Ovary (tissue), 10 donors: ENCODE measurements at regions of chr4 and their contacts with region 1.

Region 1: DNA sequence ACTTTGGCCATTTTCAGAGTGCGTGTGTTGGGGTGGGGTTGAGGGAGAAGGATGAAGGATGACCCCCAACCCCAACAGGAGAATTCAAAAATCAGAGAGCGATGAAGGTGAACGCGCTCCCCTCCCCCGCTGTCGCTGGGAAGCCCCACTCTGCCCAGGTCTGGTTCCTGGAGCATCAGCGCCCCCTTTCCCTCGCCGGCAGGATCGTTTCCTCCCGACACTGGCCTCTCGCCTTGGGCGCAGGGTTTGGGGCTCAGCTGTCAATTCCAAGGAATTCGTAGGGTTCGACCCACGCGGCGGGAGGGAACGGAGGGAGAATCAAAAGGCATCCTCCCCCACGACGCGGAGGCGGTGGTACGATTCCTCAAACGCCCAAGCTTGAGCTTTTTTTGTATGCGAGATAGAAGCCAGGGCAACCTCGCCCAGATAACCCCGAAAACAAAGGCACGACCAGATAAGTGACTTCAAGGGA is 1.0 kb upstream of the PDGFRA start:
- DNase-seq: peak; percentile 92 to 95 (median 93)
- H3K4me3 ChIP-seq: peak overlapping the region; percentile 32
- H3K27ac ChIP-seq: peak overlapping the region; percentile 59 to 81
- H3K4me1 ChIP-seq: peaks cover 4% of the 10 kb centered on the region
- H3K27me3 ChIP-seq: no peaks in the 10 kb centered on the region
- CTCF ChIP-seq: peak; percentile 70 to 91 (median 87)
- EP300 ChIP-seq: no peak
- POLR2A ChIP-seq: peak; percentile 28

Region 2: DNA sequence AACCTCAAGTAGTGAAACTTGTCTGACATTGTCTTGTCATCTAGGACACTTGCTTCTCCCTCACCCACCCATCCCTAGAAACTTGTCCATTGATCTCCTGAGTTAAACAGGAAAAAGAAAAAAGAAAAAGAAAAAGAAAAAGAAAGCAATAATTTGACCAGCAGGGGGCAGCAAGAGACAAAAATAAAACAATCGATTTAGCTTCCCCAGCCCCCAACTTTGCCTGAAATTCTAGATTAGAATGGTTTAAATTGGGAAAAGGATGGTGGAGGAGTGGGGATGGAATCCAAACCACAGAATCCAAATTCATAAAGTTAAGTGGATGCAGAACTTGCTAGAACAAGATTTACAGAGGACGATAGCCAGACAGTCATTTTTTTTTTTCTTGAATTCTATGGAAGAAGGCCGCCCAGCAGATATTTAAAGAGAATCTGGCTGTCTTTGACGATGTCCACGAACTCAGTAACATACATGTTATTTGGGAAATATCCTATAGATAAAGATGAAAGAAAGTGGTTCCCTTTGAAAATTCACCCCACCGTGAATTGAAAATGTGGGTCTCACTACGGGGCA is 1851.9 kb before region 1 on chr4:
- intact Hi-C with region 1: loop called in 1 of 4 experiments (anchors 10 kb)
- DNase-seq: peak in 3 of 5 donors; percentile 17 to 43 (median 32)
- H3K4me3 ChIP-seq: no peak overlapping the region
- H3K27ac ChIP-seq: no peak overlapping the region
- H3K4me1 ChIP-seq: no peaks in the 10 kb centered on the region
- H3K27me3 ChIP-seq: no peaks in the 10 kb centered on the region
- CTCF ChIP-seq: peak; percentile 32 to 67 (median 56)
- EP300 ChIP-seq: no peak
- POLR2A ChIP-seq: no peak

Region 3: GRCh38 chr4:53015681-53016080 is 1212.4 kb before region 1 on chr4:
- intact Hi-C with region 1: loop called (anchors 5 to 10 kb)
- DNase-seq: peak; percentile 58 to 76 (median 59)
- H3K4me3 ChIP-seq: no peak overlapping the region
- H3K27ac ChIP-seq: peak overlapping the region in 1 of 2 donors; percentile 38
- H3K4me1 ChIP-seq: peaks cover 25% of the 10 kb centered on the region
- H3K27me3 ChIP-seq: no peaks in the 10 kb centered on the region
- CTCF ChIP-seq: peak; percentile 59 to 79 (median 75)
- EP300 ChIP-seq: no peak
- POLR2A ChIP-seq: no peak

Region 4: GRCh38 chr4:53702334-53703266 is 525.5 kb before region 1 on chr4:
- intact Hi-C with region 1: loop called in 2 of 4 experiments (anchors 2 to 10 kb)
- DNase-seq: peak; percentile 81 to 90 (median 87)
- H3K4me3 ChIP-seq: no peak overlapping the region
- H3K27ac ChIP-seq: peak overlapping the region in 1 of 2 donors; percentile 52
- H3K4me1 ChIP-seq: peaks cover 8% of the 10 kb centered on the region
- H3K27me3 ChIP-seq: no peaks in the 10 kb centered on the region
- CTCF ChIP-seq: no peak
- EP300 ChIP-seq: no peak
- POLR2A ChIP-seq: no peak

Region 5: DNA sequence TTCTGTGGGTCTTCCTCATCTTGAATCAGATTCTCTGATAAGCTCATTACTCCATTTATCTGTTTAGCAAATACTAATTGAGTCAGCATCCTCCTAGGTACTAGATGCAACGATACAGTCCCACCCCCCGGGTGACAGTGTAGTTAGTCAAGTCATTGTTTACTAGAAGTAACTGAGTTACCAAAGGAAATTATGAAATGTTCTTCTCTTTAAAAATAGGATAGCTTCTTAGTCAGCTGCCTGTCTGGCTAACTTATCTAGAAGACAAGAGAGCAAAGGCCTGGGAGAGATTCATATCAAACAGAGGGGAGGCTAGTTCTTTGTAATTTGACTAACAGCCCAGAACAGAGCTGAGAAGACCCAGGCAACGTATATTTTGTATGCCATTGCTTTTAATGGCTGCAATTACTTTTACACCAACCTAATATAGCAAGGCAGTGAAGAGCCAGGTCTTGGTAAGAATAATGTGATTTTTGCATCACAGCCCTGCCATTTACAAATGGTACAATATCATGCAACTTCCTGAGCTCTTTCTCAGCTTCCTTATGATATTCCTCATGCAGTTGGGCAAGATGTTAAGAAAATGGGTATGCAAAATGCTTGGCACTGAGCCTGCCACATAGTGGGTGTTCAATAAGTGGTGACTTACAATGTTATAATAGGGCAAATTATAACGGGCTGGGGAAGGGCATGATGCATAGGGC is 313.6 kb before region 1 on chr4:
- intact Hi-C with region 1: loop called (anchors 5 to 10 kb)
- DNase-seq: no peak
- H3K4me3 ChIP-seq: no peak overlapping the region
- H3K27ac ChIP-seq: no peak overlapping the region
- H3K4me1 ChIP-seq: no peaks in the 10 kb centered on the region
- H3K27me3 ChIP-seq: no peaks in the 10 kb centered on the region
- CTCF ChIP-seq: no peak
- EP300 ChIP-seq: no peak
- POLR2A ChIP-seq: no peak

Region 6: DNA sequence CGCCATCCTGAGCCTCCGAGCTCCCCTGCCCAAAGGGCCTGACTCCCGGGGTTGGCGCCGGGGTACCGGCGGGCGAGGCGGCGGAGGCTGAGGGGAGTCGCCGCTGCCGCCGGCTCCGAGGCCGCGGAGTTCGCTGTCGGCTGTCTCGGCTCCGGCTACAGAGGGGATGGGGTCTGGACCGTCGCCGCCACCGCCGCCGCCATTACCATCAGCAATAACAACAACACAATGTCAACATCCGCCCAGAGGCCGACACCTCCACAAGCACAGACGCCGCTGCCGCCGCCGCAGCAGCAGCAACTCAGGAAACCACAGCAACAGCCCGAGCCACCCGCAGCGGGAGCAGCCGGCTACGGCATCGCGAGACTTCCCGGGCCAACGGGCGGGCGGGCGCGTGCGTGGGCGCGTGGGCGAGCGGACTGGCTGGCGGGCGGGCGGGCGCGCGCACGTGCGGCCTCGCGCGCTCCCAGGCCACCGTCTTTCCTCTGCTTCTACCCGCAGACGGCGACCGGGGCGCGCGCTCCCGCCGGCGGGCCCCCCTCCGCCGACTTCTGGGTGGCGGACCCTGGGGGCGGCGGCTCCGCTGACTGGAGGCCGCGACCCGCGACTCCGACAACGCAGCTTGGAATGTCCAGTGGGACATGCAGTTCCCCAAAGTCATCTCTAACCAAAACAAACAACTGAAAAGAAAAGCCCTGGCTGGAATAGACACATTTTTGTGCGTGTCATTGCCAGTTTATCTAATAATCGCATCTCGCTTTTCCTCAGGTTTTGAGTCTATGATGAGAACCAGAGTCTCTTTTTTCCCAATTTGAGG is 163.6 kb before region 1 on chr4 and contains the start of gene CHIC2:
- intact Hi-C with region 1: loop called in 2 of 4 experiments (anchors 10 kb)
- DNase-seq: peak; percentile 95 to 97 (median 96)
- H3K4me3 ChIP-seq: peak within 1 kb of the TSS; percentile 96
- H3K27ac ChIP-seq: peak within 1 kb of the TSS; percentile 67 to 83
- H3K4me1 ChIP-seq: peaks cover 2% of the 10 kb centered on the region
- H3K27me3 ChIP-seq: no peaks in the 10 kb centered on the region
- CTCF ChIP-seq: peak in 1 of 3 donors; percentile 9
- EP300 ChIP-seq: peak; percentile 43
- POLR2A ChIP-seq: peak; percentile 95
- total RNA-seq, gene CHIC2: 15.9 to 37.6 (median 18.3) TPM

Region 7: GRCh38 chr4:55358668-55359067 is 1130.6 kb after region 1 on chr4:
- intact Hi-C with region 1: no loop called
- DNase-seq: no peak
- H3K4me3 ChIP-seq: no peak overlapping the region
- H3K27ac ChIP-seq: no peak overlapping the region
- H3K4me1 ChIP-seq: peaks cover 7% of the 10 kb centered on the region
- H3K27me3 ChIP-seq: no peaks in the 10 kb centered on the region
- CTCF ChIP-seq: no peak
- EP300 ChIP-seq: no peak
- POLR2A ChIP-seq: no peak